Psoas muscle (tissue), 8 donors: ENCODE measurements at regions of chr19 and their contacts with region 1.

Region 1: GRCh38 chr19:36054119-36054732 is at the start of gene THAP8:
- DNase-seq: peak; percentile 100
- ATAC-seq: peak; percentile 94 to 97 (median 96)
- H3K4me3 ChIP-seq: peak within 1 kb of the TSS; percentile 71
- H3K27ac ChIP-seq: peak within 1 kb of the TSS; percentile 90
- H3K4me1 ChIP-seq: peaks cover 19% of the 10 kb centered on the region
- H3K27me3 ChIP-seq: no peaks in the 10 kb centered on the region
- CTCF ChIP-seq: peak; percentile 51
- total RNA-seq, gene THAP8: 1.9 to 7.0 (median 2.9) TPM

Region 2: GRCh38 chr19:35995048-35995993 is 58.9 kb before region 1 on chr19 and contains the start of gene SDHAF1:
- intact Hi-C with region 1: loop called in 1 of 2 experiments (anchors 2 kb)
- DNase-seq: peak; percentile 98 to 99
- ATAC-seq: peak; percentile 94 to 98 (median 97)
- H3K4me3 ChIP-seq: peak within 1 kb of the TSS; percentile 97
- H3K27ac ChIP-seq: peak within 1 kb of the TSS; percentile 92
- H3K4me1 ChIP-seq: peaks cover 26% of the 10 kb centered on the region
- H3K27me3 ChIP-seq: no peaks in the 10 kb centered on the region
- CTCF ChIP-seq: no peak
- total RNA-seq, gene SDHAF1: 7.2 to 17.3 (median 12.2) TPM

Region 3: GRCh38 chr19:36019061-36019670 is 35.1 kb before region 1 on chr19:
- intact Hi-C with region 1: loop called in 1 of 2 experiments (anchors 5 kb)
- DNase-seq: no peak
- ATAC-seq: no peak
- H3K4me3 ChIP-seq: no peak overlapping the region
- H3K27ac ChIP-seq: no peak overlapping the region
- H3K4me1 ChIP-seq: no peaks in the 10 kb centered on the region
- H3K27me3 ChIP-seq: no peaks in the 10 kb centered on the region
- CTCF ChIP-seq: no peak

Region 4: GRCh38 chr19:36114763-36115452 is 60.7 kb after region 1 on chr19 and contains the start of gene POLR2I:
- intact Hi-C with region 1: loop called (anchors 2 to 5 kb)
- DNase-seq: peak; percentile 99
- ATAC-seq: peak; percentile 93 to 95 (median 95)
- H3K4me3 ChIP-seq: peak within 1 kb of the TSS; percentile 93
- H3K27ac ChIP-seq: peak within 1 kb of the TSS; percentile 89
- H3K4me1 ChIP-seq: peaks cover 15% of the 10 kb centered on the region
- H3K27me3 ChIP-seq: no peaks in the 10 kb centered on the region
- CTCF ChIP-seq: no peak
- total RNA-seq, gene POLR2I: 89.7 to 126 (median 110) TPM

Region 5: DNA sequence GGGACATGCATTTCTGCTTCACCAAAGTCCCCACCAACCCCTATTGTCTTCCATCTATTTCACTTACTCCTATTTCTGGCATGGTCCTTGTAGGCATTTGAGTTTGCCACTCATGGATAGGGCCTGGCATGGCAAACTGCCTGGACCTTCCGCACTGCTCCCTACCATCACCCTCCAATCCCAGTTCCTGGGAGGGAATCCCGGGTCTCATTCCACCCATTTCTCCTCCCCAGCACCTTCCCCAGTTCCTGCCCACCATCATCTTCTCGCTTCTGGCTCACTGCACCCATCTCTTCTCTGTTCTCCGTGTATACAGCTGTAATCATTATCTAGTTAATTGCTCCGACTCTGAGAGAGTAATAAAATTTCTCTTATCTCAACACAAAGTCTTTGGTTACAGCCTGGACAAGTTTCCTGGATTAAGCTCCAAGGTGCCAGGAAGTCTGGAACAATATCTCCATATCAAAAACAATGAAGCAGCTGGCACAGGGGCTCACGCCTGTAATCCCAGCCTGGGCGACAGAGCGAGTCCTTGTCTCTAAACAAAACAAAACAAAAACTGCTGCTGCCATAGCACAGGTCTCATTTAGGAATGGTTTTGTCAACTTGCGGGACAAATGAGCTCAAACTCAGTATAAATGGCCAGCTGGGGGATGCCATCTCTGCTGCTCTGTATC is 115.0 kb after region 1 on chr19:
- intact Hi-C with region 1: loop called in 1 of 2 experiments (anchors 2 kb)
- DNase-seq: no peak
- ATAC-seq: peak in 1 of 4 donors; percentile 6
- H3K4me3 ChIP-seq: no peak overlapping the region
- H3K27ac ChIP-seq: peak overlapping the region; percentile 39
- H3K4me1 ChIP-seq: peaks cover 4% of the 10 kb centered on the region
- H3K27me3 ChIP-seq: no peaks in the 10 kb centered on the region
- CTCF ChIP-seq: no peak